GM10248 (cell line): ENCODE measurements at regions of chr16 and their contacts with region 1.

Region 1: GRCh38 chr16:77951775-77952174 is 70.6 kb upstream of the CLEC3A start:
- DNase-seq: peak; percentile 35
- CTCF ChIP-seq: peak; percentile 42

Region 2: DNA sequence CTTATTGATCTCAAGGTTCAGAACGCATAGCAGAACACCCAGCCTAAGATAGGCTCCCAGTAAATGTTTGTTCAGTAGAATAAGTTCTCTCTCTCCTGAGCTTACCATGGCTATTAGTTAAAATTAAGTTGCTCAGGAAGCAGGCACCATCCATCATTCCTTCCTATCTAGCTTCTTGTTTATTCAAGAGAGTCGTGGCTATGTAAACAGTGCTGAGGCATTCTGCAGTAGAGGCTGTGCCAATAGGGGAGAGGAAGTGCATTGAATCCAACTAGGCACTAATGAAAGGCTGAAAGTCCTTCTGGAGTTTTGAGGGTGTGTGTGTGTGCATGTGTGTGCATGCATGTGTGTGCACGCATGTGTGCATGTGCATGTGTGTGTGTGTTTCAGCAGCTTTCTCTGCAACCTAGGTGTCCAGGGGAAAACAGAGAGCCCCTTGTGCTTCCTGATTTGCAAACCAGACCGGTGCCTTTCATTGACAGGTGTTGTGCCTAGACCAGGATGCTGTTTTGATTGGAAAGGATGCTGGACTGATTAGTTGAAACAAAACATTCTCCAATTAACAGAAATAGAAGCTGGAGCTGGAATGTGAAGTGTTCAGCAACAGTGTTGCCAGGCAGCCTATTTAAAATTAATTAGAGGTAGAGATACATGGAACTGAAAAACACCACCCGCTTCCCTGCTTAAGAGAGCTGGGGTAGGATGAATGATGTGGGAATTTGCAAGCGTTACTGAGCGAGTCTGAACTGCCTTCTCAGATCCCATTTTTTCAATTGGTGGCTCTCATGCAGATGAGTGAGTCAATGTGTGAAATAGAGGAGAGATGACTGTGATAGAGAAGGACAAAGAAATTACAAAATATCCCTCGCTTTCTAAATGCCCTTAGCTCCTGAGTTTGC is 32.7 kb before region 1 on chr16:
- CTCF ChIA-PET with region 1: no interaction called
- POLR2A ChIA-PET with region 1: no interaction called
- DNase-seq: no peak
- CTCF ChIP-seq: no peak

Region 3: GRCh38 chr16:77963185-77964044 is 11.6 kb after region 1 on chr16:
- CTCF ChIA-PET with region 1: interaction called, 33 read pairs
- POLR2A ChIA-PET with region 1: no interaction called
- DNase-seq: peak; percentile 39
- CTCF ChIP-seq: no peak

Region 4: DNA sequence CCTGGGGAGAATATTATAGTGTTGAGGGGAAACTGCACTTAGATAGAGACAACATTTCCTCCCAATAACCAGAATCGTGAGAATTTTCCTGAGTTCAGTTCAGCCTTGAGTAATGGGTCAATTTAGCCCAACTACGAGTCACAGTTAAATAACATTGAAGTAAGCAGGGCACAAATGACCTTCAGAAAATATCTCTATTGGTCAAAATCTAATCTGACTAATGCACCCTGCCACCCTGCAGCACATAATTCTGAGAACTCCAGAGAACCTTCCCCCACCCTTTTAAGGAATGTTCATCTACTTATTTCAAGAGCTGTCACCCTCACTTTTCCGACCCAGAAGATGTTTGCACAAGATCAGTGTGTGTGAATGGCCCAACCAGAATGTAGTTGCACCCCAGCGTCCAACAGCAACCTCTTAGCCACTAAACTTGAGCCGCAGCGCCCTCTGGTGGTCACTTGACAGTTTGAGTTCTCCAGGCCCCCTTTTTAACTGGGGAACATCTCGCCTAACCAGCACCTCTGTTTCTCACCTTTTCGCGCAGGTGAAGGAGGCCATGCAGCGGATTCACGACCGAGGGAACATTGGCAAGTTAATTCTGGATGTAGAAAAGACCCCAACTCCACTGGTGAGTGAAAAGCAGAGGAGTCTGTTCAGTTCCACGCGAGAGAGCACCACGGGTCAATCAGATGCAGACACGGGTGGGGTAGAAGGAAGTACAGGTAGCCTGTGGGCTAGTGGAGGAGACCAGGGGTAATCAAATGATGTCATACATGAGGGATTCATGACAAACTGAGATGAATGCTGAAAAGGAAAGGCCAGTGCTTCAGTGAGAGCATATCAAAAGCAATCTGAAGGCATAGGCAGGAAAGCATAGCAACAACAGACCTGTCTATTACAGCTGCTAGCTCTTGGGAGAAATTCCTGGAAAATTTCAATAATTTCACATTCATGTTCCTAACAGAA is 19.8 kb after region 1 on chr16:
- CTCF ChIA-PET with region 1: interaction called, 33 read pairs
- POLR2A ChIA-PET with region 1: no interaction called
- DNase-seq: peak; percentile 62
- CTCF ChIP-seq: peak; percentile 74

Region 5: DNA sequence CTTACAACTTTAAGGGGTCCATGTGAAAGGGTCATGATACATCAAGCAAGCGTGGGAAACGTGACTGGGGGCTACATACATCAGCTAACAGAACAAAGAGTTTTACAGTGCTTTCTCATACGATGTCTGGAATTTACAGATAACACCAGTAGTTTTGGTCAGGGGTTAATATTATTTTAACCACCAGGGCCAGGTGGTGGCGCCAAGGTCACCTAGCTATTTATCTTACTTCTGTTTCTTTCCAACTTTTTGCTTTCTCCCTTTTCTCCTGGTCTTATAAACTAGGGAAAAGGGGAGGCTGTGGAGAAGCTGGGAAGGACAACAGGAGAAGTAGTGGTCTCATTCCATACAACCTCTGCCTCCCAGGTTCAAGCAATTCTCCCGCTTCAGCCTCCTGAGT is 108.5 kb after region 1 on chr16:
- CTCF ChIA-PET with region 1: no interaction called
- POLR2A ChIA-PET with region 1: no interaction called
- DNase-seq: no peak
- CTCF ChIP-seq: no peak